ENCODE measurements at regions of chr19 and their contacts with region 1.

Region 1: DNA sequence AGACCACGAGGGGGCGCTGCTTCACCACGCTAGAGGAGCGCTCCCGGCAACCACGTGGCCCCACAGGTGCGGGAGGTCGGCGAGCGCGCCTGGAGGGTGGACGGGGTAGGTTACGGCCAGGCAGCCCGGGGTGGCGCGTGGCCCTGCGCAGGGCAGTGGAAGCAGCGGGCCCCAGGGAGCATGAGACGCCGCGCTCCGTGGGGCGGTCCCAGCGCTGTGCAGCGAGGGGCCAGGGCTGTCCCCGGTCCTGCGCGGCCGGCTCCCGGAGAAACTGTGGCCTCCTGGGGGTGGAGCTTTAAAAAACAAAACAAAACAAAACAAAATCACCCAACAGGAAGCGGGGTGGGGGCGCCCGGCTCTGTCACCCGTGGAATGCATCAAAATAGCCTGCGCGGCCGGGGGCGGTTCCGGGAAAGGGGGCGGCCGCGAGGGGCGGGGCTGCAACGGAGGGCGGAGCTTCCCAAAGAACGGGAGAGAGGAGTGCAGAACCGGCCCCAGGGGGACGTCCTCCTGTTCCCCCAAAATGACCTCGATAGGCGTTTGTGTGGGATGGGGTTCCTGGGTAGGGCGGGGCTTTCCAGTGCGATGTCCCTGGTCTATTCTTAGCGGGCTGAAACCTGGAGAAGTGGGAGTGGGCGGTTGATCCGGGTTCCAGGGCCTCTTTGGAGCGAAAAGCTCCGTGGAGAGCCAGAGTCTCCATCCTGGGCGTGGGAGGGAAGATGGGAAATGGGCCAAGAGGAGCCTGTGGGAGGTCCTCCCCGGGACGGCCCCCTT is 27.3 kb downstream of the NUMBL start:
- DNase-seq: peak; percentile 93 to 96
- H3K4me3 ChIP-seq: peak overlapping the region; percentile 39 to 47
- H3K27ac ChIP-seq: peak overlapping the region; percentile 90 to 91
- H3K4me1 ChIP-seq: no peaks in the 10 kb centered on the region
- H3K27me3 ChIP-seq: no peaks in the 10 kb centered on the region
- CTCF ChIP-seq: peak in 3 of 4 experiments; percentile 99
- POLR2A ChIP-seq: peak; percentile 23 to 53

Region 2: GRCh38 chr19:39131235-39131755 is 1531.8 kb before region 1 on chr19:
- intact Hi-C with region 1: loop called (anchors 10 kb)
- DNase-seq: no peak
- H3K4me3 ChIP-seq: no peak overlapping the region
- H3K27ac ChIP-seq: peak overlapping the region; percentile 47 to 64
- H3K4me1 ChIP-seq: peaks cover 10 to 22% of the 10 kb centered on the region in 2 donors
- H3K27me3 ChIP-seq: no peaks in the 10 kb centered on the region
- CTCF ChIP-seq: no peak
- POLR2A ChIP-seq: no peak

Region 3: GRCh38 chr19:40750059-40750873 is 87.2 kb after region 1 on chr19 and contains the start of gene ACTMAP:
- intact Hi-C with region 1: no loop called
- DNase-seq: peak; percentile 99 to 100
- H3K4me3 ChIP-seq: peak within 1 kb of the TSS; percentile 84 to 90
- H3K27ac ChIP-seq: peak within 1 kb of the TSS; percentile 94 to 96
- H3K4me1 ChIP-seq: peaks cover 0 to 3% of the 10 kb centered on the region in 2 donors
- H3K27me3 ChIP-seq: no peaks in the 10 kb centered on the region
- CTCF ChIP-seq: peak in 1 of 4 experiments; percentile 19
- POLR2A ChIP-seq: peak; percentile 73 to 89
- total RNA-seq, gene ACTMAP: 0.48 to 6.1 TPM in 2 of 4 donors, not detected in the others

Region 4: DNA sequence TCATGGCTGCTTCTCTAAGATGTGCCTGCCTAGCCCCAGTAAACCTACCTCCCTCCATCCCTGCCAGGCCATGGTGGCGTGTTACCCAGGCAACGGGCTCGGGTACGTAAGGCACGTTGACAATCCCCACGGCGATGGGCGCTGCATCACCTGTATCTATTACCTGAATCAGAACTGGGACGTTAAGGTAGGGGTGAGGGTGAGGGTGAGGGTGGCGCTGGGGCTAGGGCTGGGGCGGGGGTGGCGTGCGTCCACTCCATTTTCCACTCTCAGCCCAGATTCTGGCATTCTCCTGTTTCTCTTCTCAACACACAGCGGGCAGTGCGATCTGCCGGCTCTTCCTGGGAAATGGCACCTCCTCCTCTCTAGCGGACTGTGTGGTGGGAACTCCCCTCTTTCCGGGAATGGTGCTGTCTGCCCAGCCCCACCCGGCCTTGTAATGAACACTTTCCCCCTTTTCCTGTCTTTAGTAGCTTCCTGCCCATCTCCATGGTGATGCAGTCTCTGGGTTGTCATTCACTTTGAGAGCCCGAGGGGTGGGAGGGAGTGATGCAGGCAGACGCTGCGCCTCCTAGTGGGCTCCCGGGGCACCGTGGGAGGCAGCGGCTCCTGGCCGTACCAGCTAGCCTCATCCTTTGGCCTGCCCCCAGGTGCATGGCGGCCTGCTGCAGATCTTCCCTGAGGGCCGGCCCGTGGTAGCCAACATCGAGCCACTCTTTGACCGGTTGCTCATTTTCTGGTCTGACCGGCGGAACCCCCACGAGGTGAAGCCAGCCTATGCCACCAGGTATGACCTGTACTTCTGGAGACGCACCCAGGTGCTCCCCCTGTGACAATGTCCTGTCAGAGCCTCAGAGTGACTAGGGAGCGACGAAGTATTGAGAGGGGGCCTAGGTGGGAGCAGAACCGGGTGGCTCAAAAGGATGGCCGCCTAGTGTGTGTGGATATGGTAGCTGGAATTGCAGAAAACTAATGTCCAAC is 143.7 kb after region 1 on chr19:
- intact Hi-C with region 1: loop called (anchors 5 kb)
- DNase-seq: peak; percentile 84 to 89
- H3K4me3 ChIP-seq: no peak overlapping the region
- H3K27ac ChIP-seq: peak overlapping the region; percentile 73 to 74
- H3K4me1 ChIP-seq: peaks cover 8 to 28% of the 10 kb centered on the region in 2 donors
- H3K27me3 ChIP-seq: no peaks in the 10 kb centered on the region
- CTCF ChIP-seq: peak; percentile 82 to 90 (median 86)
- POLR2A ChIP-seq: peak; percentile 14 to 19

Measured in uterus (tissue), 4 donors.